ENCODE measurements at regions of chr13 and their contacts with region 1.

Region 1: DNA sequence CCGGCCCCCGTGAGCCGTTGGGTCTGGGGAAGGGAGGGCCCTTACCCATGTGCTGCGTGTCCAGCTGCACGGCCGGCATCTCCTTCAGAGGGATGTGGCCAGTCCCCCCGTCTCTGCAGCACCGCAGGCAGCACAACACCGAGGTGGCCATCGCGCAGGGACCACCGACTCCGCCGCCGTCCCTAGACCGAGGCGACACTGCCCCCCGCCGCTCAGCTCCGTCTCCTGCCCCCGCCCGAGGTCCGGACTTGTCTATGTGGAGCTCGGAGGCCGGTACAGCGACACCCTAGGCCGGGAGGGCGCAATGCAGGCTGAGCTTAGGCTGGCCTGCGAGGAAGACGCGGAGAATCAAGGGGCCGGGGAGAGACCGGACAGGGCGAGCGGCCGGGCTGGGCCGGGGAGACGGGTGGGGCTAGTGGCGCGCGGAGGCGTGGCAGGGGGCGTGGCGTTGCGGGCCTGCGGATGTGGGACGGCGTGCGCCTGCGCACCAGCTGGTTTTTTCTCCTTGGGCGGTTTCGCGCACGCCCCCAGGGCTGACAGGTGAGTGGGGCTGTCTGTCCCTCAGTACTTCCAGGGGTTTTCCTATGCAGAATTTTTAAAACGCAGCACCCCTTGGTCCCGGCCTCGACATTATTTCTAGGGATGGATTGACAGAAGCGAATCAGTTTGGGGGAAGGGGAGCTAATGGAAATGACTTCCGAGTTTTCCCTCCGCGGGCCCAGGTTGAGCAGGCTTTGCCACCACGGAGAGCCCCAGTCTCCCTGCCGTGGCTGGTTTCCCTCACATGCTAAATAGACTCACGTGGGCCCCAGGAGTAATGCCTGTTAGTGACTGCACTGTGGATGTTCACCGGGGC is at the start of gene SPRYD7:
- DNase-seq: peak; percentile 97
- H3K4me3 Mint-ChIP-seq: peak within 1 kb of the TSS; percentile 88
- H3K27ac Mint-ChIP-seq: peak within 1 kb of the TSS; percentile 72
- H3K4me1 Mint-ChIP-seq: peaks cover 7% of the 10 kb centered on the region
- H3K27me3 Mint-ChIP-seq: no peaks in the 10 kb centered on the region
- CTCF ChIP-seq: peak; percentile 88
- total RNA-seq, gene SPRYD7: 15.1 and 19.5 TPM in 2 replicates

Region 2: DNA sequence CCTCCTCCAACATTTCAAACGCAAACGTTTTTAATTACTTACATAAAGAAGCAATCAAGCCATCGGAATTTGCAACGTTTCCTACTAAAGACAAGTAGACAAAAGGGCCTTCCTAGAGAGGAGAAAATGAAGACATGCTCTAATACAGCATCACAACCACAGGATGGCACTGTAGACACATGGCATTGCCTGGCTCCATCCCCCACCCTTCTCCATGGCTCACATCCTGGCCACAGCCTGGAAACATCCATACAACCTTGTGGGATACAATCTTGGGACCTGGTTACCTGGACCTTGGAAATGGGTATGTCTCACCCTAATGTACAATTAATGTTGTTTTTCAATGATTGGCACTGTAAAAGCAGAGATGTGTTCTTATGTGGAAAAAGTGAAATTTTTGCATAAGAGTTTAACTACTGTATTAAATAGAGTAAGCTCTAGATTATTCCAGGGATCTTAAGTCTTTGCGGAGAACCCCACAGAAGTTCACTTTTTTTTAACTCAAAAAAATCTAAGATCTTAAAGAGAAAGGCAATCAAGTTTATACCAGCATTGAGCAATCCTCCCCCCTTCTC is 266.5 kb before region 1 on chr13:
- CTCF ChIA-PET with region 1: interaction called, 3 read pairs
- POLR2A ChIA-PET with region 1: no interaction called
- intact Hi-C with region 1: loop called (anchors 5 kb)
- DNase-seq: peak; percentile 73
- H3K4me3 Mint-ChIP-seq: no peak overlapping the region
- H3K27ac Mint-ChIP-seq: no peak overlapping the region
- H3K4me1 Mint-ChIP-seq: peaks cover 30% of the 10 kb centered on the region
- H3K27me3 Mint-ChIP-seq: no peaks in the 10 kb centered on the region
- CTCF ChIP-seq: peak; percentile 73

Region 3: GRCh38 chr13:49858183-49858856 is 78.0 kb before region 1 on chr13:
- CTCF ChIA-PET with region 1: interaction called, 4 read pairs
- POLR2A ChIA-PET with region 1: interaction called, 15 read pairs
- intact Hi-C with region 1: loop called (anchors 1 kb)
- DNase-seq: peak; percentile 84
- H3K4me3 Mint-ChIP-seq: peak overlapping the region; percentile 50
- H3K27ac Mint-ChIP-seq: peak overlapping the region; percentile 91
- H3K4me1 Mint-ChIP-seq: peaks cover 19% of the 10 kb centered on the region
- H3K27me3 Mint-ChIP-seq: no peaks in the 10 kb centered on the region
- CTCF ChIP-seq: no peak

Region 4: GRCh38 chr13:49922301-49922700 is 14.0 kb before region 1 on chr13:
- CTCF ChIA-PET with region 1: interaction called, 4 read pairs
- POLR2A ChIA-PET with region 1: interaction called, 16 read pairs
- intact Hi-C with region 1: no loop called
- DNase-seq: no peak
- H3K4me3 Mint-ChIP-seq: no peak overlapping the region
- H3K27ac Mint-ChIP-seq: no peak overlapping the region
- H3K4me1 Mint-ChIP-seq: no peaks in the 10 kb centered on the region
- H3K27me3 Mint-ChIP-seq: no peaks in the 10 kb centered on the region
- CTCF ChIP-seq: no peak

Region 5: GRCh38 chr13:49951754-49952535 is 15.6 kb after region 1 on chr13:
- CTCF ChIA-PET with region 1: interaction called, 21 read pairs
- POLR2A ChIA-PET with region 1: interaction called, 4 read pairs
- intact Hi-C with region 1: no loop called
- DNase-seq: no peak
- H3K4me3 Mint-ChIP-seq: no peak overlapping the region
- H3K27ac Mint-ChIP-seq: no peak overlapping the region
- H3K4me1 Mint-ChIP-seq: no peaks in the 10 kb centered on the region
- H3K27me3 Mint-ChIP-seq: no peaks in the 10 kb centered on the region
- CTCF ChIP-seq: no peak

Region 6: DNA sequence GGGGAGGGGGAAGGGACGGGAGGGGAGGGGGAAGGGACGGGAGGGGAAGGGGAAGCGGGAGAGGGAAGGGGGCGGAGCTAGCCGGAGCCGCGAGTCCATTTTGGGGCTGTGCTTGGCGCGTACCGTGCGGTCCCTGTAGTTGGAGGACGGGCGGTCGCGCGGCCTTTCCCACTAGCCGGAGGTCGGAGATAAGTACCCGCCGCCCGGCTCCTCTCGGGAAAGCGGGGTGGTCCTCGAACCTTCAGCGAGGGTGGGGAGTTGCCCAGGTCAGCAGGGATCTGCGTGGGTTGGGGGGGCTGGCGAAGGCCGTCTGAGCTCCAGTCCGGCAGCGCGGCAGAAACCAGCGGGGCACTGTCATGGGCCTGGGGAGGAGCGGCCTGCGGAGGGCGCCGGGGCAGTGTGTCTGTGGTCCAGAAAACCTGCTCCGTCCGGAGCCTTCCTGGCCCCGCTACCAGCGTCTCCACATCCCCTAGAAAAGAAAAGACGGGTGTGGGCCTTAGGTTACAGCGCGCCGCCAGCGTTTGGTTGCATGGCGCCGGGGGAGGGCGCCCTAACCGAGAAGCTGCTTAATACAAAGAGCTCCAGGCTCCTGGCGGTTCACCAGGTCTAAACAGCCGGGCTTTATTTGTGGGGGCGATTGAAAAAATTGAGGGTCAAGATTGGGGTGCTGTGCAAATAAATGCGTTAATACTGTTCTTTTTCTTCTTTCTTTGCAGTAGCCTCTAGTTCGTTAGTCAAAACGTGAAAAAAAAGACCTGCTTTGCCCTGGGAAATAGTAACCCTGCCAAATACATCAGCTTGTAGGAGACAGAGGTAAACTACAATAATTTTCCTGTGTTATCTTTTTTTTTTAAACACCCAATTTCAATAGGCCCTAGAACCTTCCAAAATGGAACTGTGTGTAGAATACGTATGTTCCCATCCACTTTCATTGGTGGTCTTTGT is 60.9 kb after region 1 on chr13 and contains the start of gene TRIM13:
- CTCF ChIA-PET with region 1: interaction called, 3 read pairs
- POLR2A ChIA-PET with region 1: interaction called, 32 read pairs
- intact Hi-C with region 1: no loop called
- DNase-seq: peak; percentile 91
- H3K4me3 Mint-ChIP-seq: peak within 1 kb of the TSS; percentile 89
- H3K27ac Mint-ChIP-seq: peak within 1 kb of the TSS; percentile 80
- H3K4me1 Mint-ChIP-seq: peaks cover 16% of the 10 kb centered on the region
- H3K27me3 Mint-ChIP-seq: no peaks in the 10 kb centered on the region
- CTCF ChIP-seq: peak; percentile 79
- total RNA-seq, gene TRIM13: 17.5 and 19.0 TPM in 2 replicates